ENCODE measurements at regions of chr7 and their contacts with region 1.

Region 1: DNA sequence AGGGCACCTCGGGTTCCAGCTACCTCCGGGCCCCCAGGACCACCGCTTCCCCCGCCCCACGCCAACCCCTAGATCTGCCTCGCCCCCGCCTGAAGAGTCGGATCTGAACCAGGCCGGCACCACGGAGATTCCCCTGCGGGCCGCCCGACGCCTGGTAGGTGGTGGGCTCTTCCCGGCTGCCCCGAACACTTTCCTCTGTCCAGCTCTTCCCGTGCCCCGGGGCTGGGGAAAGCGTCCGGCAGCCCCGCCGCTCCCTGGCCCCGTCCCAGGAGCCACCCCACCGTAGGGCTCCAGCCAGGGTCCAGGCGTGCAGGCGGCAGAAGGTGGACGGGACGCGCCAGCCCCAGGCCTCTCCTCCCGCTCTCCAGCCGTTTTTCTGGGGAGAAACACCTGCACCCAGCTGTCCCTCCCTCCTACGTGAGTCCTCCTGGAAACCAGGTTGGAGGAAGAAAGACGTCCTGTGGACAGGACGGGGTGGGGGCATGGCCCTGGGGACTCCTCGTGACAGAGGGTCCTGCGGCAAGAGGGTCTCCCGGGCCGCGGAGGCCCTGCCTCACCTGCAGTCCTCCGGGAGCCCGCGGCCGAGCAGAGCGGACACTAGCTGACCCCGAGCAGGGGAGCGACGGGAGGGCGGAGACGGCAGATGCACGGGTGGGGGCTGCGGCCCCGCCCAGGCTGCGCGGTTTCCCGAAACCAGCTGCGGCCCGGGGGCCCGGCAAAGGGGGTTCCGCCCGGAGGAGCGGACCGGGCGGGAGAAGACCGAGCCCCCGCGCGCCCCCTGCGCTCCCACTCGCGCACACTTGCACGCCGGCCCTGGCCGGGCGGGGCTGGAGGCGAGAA is at the start of gene TMEM176B:
- DNase-seq: peak; percentile 84 to 92 (median 88)
- ATAC-seq: peak; percentile 76 to 89 (median 82)
- H3K4me3 ChIP-seq: peak within 1 kb of the TSS; percentile 77 to 92 (median 92)
- H3K27ac ChIP-seq: peak within 1 kb of the TSS; percentile 90 to 97 (median 95)
- H3K4me1 ChIP-seq: peaks cover 0 to 40% (median 0%) of the 10 kb centered on the region in 4 donors
- H3K27me3 ChIP-seq: no peaks in the 10 kb centered on the region
- CTCF ChIP-seq: no peak
- POLR2A ChIP-seq: peak; percentile 87
- total RNA-seq, gene TMEM176B: 711 to 1,315 (median 795) TPM

Region 2: GRCh38 chr7:150722431-150722931 is 77.5 kb before region 1 on chr7:
- intact Hi-C with region 1: no loop called
- DNase-seq: no peak
- ATAC-seq: peak in 1 of 4 donors; percentile 10
- H3K4me3 ChIP-seq: no peak overlapping the region
- H3K27ac ChIP-seq: no peak overlapping the region
- H3K4me1 ChIP-seq: peaks cover 0 to 11% (median 2%) of the 10 kb centered on the region in 4 donors
- H3K27me3 ChIP-seq: no peaks in the 10 kb centered on the region
- CTCF ChIP-seq: no peak
- POLR2A ChIP-seq: no peak

Region 3: GRCh38 chr7:150876817-150877526 is 77.0 kb after region 1 on chr7:
- intact Hi-C with region 1: loop called in 1 of 2 experiments (anchors 10 kb)
- DNase-seq: peak; percentile 49 to 67 (median 59)
- ATAC-seq: peak; percentile 88 to 93 (median 93)
- H3K4me3 ChIP-seq: no peak overlapping the region
- H3K27ac ChIP-seq: no peak overlapping the region
- H3K4me1 ChIP-seq: peaks cover 0 to 3% (median 0%) of the 10 kb centered on the region in 4 donors
- H3K27me3 ChIP-seq: no peaks in the 10 kb centered on the region
- CTCF ChIP-seq: peak; percentile 51 to 72 (median 52)
- POLR2A ChIP-seq: no peak